Dendritic cell treated with granulocyte-macrophage colony-stimulating factor and Interleukin-4, amounts not matched to agents 40 ng/mL and 50 ng/mL, for 4 days (primary cell): ENCODE measurements at regions of chr6 and their contacts with region 1.

Region 1: GRCh38 chr6:24991810-24992467 is 56.2 kb upstream of the RIPOR2 start:
- H3K4me3 Mint-ChIP-seq: no peak overlapping the region
- H3K27ac Mint-ChIP-seq: no peak overlapping the region
- H3K4me1 Mint-ChIP-seq: peaks cover 17% of the 10 kb centered on the region
- H3K27me3 Mint-ChIP-seq: no peaks in the 10 kb centered on the region

Region 2: DNA sequence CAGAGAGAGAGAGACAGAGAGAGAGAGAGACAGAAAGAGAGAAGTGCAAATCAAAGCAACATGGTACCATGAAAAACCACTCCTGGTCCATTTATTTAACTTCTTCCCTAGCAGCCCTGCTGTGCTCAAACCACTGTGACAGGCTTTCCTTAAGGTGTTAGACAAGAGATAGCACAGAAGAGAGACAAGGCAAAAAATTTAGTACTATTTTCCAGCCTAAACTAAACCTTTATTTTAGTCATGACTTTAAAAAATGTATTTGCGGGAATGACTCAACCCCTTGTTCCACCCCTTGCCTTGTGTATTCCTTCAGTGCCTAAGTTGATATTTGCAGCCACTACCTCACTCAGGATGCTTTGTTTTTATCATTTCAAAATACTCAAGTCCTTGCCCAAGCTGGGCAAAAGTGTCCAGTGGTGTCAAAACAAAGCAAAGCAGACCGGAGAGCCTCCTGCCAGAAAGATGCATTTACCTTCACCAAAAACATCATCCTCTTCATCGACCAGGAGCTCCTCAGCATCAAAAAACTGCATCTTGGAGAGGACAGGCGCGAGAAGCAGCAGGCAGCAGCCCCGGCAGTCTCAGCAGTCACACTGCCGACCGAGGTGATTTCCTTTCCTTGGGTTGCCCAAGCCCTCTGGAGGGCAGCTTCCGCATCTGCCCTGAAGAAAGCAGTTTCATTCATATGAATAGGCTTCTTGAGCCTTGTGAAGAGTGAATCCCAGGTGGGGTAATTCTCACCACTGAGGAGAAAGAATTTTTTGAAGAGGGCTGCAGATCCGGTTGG is 56.4 kb before region 1 on chr6 and contains the start of gene RIPOR2:
- intact Hi-C with region 1: loop called (anchors 5 kb)
- H3K4me3 Mint-ChIP-seq: peak within 1 kb of the TSS; percentile 50
- H3K27ac Mint-ChIP-seq: peak within 1 kb of the TSS; percentile 69
- H3K4me1 Mint-ChIP-seq: peaks cover 63% of the 10 kb centered on the region
- H3K27me3 Mint-ChIP-seq: no peaks in the 10 kb centered on the region

Region 3: DNA sequence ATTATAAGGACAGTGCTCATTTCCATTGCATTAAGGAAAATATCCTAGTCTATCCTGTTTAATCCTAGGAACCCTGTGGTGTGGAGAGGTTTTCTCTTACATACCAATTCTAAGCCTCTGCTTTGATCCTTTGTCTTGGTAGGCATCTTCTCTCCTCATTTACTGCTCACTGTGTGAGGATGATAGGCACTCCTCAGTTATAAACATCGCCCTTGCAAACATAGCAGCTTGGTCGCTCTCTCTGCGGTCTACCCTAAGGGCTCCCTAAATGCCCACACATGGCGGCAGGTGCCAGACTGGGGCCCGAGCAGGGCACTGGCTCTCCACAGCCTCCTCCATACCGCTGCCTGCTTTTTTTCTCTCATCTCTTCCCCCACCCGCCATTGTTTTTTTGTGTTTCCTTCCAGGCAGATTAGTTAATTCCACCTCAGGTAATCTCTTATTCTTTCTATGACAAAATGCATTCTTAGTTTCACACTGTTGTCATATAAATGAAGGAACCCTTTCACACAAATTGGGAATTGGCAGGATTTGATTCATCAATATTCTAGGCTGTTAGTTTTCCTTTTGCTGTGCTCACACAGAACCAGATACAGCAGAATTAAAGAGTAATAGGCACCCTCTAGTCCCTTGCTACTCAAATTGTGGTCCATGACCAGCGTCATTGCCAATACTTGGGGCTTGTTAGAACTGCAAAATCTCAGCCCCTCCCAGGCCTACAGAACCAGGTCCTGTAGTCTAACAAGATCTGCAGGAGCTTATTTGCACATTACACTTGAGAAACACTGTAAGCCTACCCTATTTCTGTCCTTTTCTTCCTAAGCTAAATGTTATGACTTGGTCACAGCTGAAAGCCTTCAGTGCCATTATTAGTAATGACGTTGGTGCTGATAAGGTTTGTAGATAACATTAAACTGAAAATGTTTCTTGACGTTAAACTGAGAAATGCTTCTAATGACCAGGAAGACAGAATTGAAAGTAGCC is 323.5 kb after region 1 on chr6:
- intact Hi-C with region 1: no loop called
- H3K4me3 Mint-ChIP-seq: no peak overlapping the region
- H3K27ac Mint-ChIP-seq: no peak overlapping the region
- H3K4me1 Mint-ChIP-seq: peaks cover 20% of the 10 kb centered on the region
- H3K27me3 Mint-ChIP-seq: no peaks in the 10 kb centered on the region

Region 4: GRCh38 chr6:25359191-25359861 is 367.4 kb after region 1 on chr6:
- intact Hi-C with region 1: no loop called
- H3K4me3 Mint-ChIP-seq: no peak overlapping the region
- H3K27ac Mint-ChIP-seq: no peak overlapping the region
- H3K4me1 Mint-ChIP-seq: peaks cover 15% of the 10 kb centered on the region
- H3K27me3 Mint-ChIP-seq: no peaks in the 10 kb centered on the region

Region 5: DNA sequence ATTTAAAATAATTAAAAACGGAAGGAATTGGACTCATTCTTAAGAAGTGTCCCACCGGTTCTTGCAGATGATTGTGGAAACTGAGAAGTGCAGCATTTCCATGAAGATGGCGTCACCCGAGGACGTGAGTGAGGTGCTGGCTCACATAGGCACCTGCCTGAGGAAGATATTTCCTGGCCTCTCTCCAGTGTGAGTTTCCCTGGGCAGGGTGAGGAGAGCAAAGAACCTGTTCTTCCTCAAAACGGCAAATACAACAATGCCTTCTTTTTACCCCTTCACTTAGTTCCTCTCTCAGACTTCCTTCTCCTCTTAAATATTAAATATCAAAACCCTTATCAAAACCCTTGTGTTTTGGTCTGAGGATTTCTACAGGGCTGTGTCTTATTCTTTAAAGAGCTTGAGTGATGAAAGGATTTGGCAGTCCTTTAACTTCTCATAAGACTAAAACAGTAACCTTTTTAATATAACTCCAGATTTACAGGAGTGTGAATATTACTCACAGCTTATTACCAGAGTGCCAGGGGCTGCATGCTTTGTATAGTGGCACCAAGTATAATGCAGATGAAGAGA is 443.6 kb after region 1 on chr6:
- intact Hi-C with region 1: no loop called
- H3K4me3 Mint-ChIP-seq: peak overlapping the region; percentile 42
- H3K27ac Mint-ChIP-seq: peak overlapping the region; percentile 67
- H3K4me1 Mint-ChIP-seq: peaks cover 49% of the 10 kb centered on the region
- H3K27me3 Mint-ChIP-seq: no peaks in the 10 kb centered on the region